ENCODE measurements at regions of chr6 and their contacts with region 1.

Region 1: DNA sequence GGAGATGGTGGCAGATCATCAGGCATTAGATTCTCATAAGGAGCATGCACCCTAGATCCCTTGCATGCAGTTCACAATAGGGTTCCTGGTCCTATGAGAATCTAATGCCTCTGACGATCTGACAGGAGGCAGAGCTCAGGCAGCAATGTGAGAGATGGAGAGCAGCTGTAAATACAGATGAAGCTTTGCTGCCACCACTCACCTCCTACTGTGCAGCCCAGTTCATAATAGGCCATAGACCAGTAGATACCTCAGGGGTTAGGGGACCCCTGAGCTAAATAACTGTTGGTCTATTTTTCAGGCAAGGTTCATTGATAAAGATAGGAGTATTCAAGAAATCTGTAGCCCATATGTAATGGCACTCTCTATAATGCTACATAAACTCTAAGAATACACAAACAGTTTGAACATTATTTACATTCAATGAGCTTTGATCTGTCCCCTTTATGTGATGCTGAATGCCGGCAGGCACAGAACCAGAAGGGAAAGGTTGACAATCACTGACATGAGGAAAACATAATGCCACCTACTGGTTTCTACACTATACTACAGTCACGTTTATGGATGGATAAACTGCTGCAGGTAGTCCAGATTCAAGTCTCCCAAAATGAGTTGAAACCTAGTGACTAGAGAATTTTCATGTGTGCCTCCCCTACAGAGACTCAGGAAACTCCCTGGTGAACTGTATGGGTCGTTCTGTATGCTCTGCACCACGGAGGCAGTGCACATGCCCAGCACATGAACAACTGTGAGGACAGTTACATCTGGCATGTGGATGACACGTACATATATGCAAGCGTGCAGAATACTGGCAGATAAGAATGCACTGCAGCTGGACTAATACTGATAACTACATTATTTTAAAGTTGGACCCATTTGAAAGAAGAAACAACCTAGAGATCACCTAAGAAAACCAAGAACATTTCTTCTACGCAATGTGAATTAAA is 72.0 kb downstream of the DST start:
- DNase-seq: peak; percentile 60
- H3K4me3 Mint-ChIP-seq: no peak overlapping the region
- H3K27ac Mint-ChIP-seq: no peak overlapping the region
- H3K4me1 Mint-ChIP-seq: no peaks in the 10 kb centered on the region
- H3K27me3 Mint-ChIP-seq: no peaks in the 10 kb centered on the region

Region 2: DNA sequence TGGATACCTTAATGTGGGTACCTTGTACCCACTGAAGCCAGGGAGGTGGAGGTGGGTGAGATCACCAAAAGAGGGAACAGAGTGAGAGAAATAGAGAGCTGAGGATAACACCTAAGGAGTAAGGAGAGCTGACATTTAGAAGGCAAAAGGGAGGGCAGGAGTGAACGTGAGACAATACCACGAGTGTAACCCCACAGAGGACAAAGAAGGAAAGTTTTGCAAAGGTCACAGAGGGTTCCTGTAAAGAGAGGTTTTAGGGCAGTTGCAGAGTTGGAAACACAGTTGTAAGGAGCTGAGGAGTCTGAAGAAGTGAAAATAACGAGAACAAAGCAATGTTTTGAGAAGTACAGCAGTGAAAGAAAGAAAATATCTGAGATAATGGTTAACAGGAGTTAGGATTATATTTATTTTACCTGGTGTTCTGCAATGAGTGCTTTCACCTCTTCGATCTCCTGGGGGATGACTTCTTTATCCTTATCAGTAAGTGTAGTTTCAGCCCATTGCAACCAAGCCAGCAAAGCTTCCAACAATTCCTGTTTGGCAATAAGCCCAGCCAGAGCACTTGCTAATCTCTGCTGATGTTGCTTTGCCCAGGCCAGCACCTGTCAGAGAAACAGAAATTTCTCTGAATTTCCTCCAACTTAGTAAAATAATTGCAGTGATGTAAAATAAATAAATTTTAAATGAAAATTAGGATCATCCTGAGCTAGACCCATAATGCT is 94.8 kb before region 1 on chr6:
- intact Hi-C with region 1: loop called (anchors 10 kb)
- DNase-seq: no peak
- H3K4me3 Mint-ChIP-seq: no peak overlapping the region
- H3K27ac Mint-ChIP-seq: no peak overlapping the region
- H3K4me1 Mint-ChIP-seq: no peaks in the 10 kb centered on the region
- H3K27me3 Mint-ChIP-seq: no peaks in the 10 kb centered on the region